ENCODE measurements at regions of chr4 and their contacts with region 1.

Region 1: DNA sequence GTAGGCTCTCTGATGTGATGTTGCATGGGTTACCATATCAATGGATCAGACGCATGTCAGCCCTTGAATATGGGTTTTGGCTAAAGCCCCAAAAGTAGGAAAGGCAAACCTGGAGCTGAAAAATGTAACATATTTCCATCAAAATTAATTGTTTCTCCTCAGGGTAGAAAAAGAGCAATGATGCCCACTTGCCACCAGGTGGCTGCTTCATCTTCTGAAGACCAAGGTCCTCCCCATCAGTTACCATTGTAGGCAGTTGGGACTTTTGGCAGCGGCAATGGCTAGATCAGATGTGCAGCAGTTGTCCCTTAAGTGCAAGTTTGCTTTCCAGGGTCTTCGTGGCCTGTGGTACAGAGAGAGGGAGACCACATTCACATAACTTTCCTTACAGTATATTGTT is 118.2 kb downstream of the NAF1 start:
- DNase-seq: no peak
- ATAC-seq: no peak
- H3K4me3 Mint-ChIP-seq: no peak overlapping the region
- H3K27ac Mint-ChIP-seq: no peak overlapping the region
- H3K4me1 Mint-ChIP-seq: no peaks in the 10 kb centered on the region
- H3K27me3 Mint-ChIP-seq: peaks cover 4% of the 10 kb centered on the region
- CTCF ChIP-seq: no peak

Region 2: DNA sequence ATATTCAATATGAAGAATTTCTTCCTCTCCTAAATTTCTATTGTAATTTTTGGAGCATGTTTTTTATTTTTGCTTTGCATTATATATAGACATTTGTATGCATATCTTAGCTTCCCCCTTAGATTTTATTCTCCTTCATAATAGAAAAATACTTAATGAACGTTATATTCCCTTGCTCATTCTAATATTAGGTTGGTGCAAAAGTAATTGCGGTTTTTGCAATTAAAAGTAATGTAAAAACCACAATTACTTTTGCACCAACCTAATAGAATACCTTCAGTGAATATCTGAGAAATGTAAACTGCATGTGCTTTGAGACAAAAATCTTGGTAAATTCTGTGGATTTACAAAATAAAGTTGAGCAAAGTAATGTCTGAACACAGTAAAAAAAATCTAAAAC is 306.0 kb before region 1 on chr4:
- CTCF ChIA-PET with region 1: no interaction called
- POLR2A ChIA-PET with region 1: no interaction called
- intact Hi-C with region 1: no loop called
- DNase-seq: no peak
- ATAC-seq: no peak
- H3K4me3 Mint-ChIP-seq: no peak overlapping the region
- H3K27ac Mint-ChIP-seq: no peak overlapping the region
- H3K4me1 Mint-ChIP-seq: no peaks in the 10 kb centered on the region
- H3K27me3 Mint-ChIP-seq: no peaks in the 10 kb centered on the region
- CTCF ChIP-seq: no peak

Region 3: GRCh38 chr4:163332500-163333406 is 284.3 kb after region 1 on chr4 and contains the start of gene NPY1R:
- CTCF ChIA-PET with region 1: no interaction called
- POLR2A ChIA-PET with region 1: no interaction called
- intact Hi-C with region 1: loop called (anchors 1 kb)
- DNase-seq: no peak
- ATAC-seq: no peak
- H3K4me3 Mint-ChIP-seq: peak within 1 kb of the TSS; percentile 71
- H3K27ac Mint-ChIP-seq: no peak within 1 kb of the TSS
- H3K4me1 Mint-ChIP-seq: peaks cover 18% of the 10 kb centered on the region
- H3K27me3 Mint-ChIP-seq: peaks cover 46% of the 10 kb centered on the region
- CTCF ChIP-seq: no peak
- total RNA-seq, gene NPY1R: not detected in 2 replicates

Region 4: DNA sequence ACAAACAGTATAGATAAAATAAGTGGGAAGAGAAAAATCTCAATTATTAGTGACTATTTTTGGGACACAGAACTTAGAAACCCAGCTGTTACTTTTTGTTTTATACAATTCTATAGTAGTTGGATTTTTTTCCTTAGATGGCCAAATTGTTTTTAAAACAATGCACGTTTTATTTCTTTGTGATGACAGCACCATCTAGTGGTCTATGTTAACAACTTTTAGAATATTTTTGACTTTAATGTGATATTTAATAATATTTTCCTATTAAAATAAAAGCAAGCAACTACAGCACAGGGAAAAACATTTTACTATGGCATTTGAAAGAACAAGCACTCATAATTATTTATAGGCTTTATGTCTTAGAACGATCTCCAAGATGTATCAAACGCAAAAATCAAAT is 1699.9 kb after region 1 on chr4:
- CTCF ChIA-PET with region 1: no interaction called
- POLR2A ChIA-PET with region 1: no interaction called
- intact Hi-C with region 1: loop called (anchors 1 kb)
- DNase-seq: no peak
- ATAC-seq: no peak
- H3K4me3 Mint-ChIP-seq: no peak overlapping the region
- H3K27ac Mint-ChIP-seq: no peak overlapping the region
- H3K4me1 Mint-ChIP-seq: no peaks in the 10 kb centered on the region
- H3K27me3 Mint-ChIP-seq: no peaks in the 10 kb centered on the region
- CTCF ChIP-seq: no peak